T-cell (primary cell): ENCODE measurements at regions of chr12 and their contacts with region 1.

Region 1: GRCh38 chr12:111529424-111530368 is 69.4 kb downstream of the ATXN2 start:
- DNase-seq: peak in 34 of 35 experiments; percentile 27 to 80 (median 50)
- ATAC-seq: peak; percentile 67 to 82 (median 72)
- H3K4me3 ChIP-seq: no peak overlapping the region
- H3K4me3 Mint-ChIP-seq: no peak overlapping the region
- H3K27ac ChIP-seq: no peak overlapping the region
- H3K27ac Mint-ChIP-seq: no peak overlapping the region
- H3K4me1 ChIP-seq: no peaks in the 10 kb centered on the region
- H3K4me1 Mint-ChIP-seq: peaks cover 3 to 6% (median 4%) of the 10 kb centered on the region in 3 donors
- H3K27me3 ChIP-seq: no peaks in the 10 kb centered on the region
- H3K27me3 Mint-ChIP-seq: no peaks in the 10 kb centered on the region

Region 2: GRCh38 chr12:111396726-111397445 is 132.8 kb before region 1 on chr12:
- CTCF ChIA-PET with region 1: interaction called, 8 to 26 read pairs
- POLR2A ChIA-PET with region 1: no interaction called
- DNase-seq: peak; percentile 62 to 93 (median 83)
- ATAC-seq: peak; percentile 92 to 98 (median 94)
- H3K4me3 ChIP-seq: peak overlapping the region in 1 of 2 donors; percentile 26
- H3K4me3 Mint-ChIP-seq: peak overlapping the region; percentile 44 to 66 (median 65)
- H3K27ac ChIP-seq: no peak overlapping the region
- H3K27ac Mint-ChIP-seq: peak overlapping the region in 1 of 2 donors; percentile 52
- H3K4me1 ChIP-seq: peaks cover 0 to 9% of the 10 kb centered on the region in 2 experiments
- H3K4me1 Mint-ChIP-seq: peaks cover 7 to 17% (median 13%) of the 10 kb centered on the region in 3 donors
- H3K27me3 ChIP-seq: peaks cover 0 to 3% of the 10 kb centered on the region in 2 experiments
- H3K27me3 Mint-ChIP-seq: no peaks in the 10 kb centered on the region

Region 3: DNA sequence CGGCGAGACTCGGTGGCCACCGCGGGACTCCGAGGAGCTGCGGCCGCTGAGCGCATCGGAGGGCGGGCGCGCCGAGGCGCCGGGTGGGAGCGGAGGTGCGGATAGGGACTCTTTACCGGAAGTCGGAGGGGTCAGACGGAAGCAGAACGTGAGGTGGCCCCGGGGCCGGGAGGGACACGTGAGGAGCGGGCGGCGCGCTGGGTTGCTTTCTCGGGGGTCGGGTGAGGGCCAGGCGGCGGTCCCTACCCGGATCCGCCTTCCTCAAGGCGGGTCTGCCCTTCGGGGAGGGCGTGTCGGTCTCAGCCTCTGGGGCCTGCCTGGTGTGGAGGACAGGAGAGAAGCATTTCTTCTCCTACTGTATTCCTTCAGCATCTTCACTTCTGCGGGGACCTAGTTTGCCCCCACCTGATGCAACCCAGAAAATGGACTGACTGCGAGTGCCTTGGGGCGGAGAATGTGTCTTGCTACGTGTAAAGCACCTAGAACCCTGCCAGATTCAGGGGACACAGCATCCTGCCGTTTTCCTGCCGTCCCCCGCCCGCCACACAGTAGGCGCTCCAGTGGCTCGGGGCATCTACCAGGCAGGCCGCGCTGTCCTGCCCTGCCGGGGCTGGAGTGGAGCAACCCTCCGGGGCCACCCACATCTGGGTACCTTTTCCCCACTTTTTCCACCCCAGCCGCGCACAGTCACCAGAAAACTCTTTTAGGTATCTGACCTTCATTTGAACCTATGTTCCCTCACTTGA is 69.9 kb after region 1 on chr12:
- CTCF ChIA-PET with region 1: no interaction called
- POLR2A ChIA-PET with region 1: no interaction called
- DNase-seq: peak; percentile 61 to 90 (median 76)
- ATAC-seq: peak; percentile 78 to 84 (median 80)
- H3K4me3 ChIP-seq: peak overlapping the region; percentile 76 to 93
- H3K4me3 Mint-ChIP-seq: peak overlapping the region; percentile 81 to 87 (median 84)
- H3K27ac ChIP-seq: peak overlapping the region; percentile 79
- H3K27ac Mint-ChIP-seq: peak overlapping the region; percentile 77 to 90
- H3K4me1 ChIP-seq: peaks cover 12 to 21% of the 10 kb centered on the region in 2 experiments
- H3K4me1 Mint-ChIP-seq: peaks cover 33 to 38% (median 37%) of the 10 kb centered on the region in 3 donors
- H3K27me3 ChIP-seq: no peaks in the 10 kb centered on the region
- H3K27me3 Mint-ChIP-seq: no peaks in the 10 kb centered on the region